AG04449 (cell line): ENCODE measurements at regions of chr3 and their contacts with region 1.

Region 1: DNA sequence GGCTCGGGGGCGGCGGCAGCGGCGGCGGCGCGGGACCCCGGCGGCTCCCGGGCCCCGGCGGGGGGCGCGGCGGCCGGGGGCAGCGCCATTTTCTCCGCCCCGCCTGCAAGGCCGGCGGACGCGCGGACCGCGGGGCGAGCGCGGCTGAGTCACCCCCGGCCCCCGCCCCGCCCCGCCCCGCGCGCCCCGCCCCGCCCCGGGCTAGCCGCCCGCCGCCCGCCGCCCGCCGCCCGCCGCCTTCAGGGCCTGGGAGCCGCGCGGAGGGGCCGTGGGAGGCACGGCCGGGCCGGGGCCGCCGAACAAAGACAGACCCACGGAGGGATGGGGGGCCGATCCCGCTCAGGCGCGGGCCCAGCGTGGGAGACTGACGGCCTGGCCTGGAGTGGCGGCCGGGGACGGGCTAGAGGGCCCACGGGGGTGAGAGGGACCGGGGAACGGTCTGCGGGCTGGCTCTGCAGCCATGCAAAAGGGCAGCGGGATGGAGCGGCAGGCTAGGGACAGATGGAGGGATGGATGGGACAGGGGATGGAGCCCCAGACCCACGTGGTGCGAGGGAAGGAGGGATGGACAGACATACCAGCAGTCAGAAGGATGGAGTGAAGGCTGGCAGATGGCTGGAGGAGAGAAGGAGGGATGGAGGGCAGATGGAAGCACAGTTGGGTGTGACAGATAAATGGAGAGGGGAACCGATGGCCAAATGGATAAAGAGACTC is at the start of gene EIF4E3:
- DNase-seq: no peak
- H3K4me3 ChIP-seq: peak within 1 kb of the TSS; percentile 69
- CTCF ChIP-seq: no peak

Region 2: DNA sequence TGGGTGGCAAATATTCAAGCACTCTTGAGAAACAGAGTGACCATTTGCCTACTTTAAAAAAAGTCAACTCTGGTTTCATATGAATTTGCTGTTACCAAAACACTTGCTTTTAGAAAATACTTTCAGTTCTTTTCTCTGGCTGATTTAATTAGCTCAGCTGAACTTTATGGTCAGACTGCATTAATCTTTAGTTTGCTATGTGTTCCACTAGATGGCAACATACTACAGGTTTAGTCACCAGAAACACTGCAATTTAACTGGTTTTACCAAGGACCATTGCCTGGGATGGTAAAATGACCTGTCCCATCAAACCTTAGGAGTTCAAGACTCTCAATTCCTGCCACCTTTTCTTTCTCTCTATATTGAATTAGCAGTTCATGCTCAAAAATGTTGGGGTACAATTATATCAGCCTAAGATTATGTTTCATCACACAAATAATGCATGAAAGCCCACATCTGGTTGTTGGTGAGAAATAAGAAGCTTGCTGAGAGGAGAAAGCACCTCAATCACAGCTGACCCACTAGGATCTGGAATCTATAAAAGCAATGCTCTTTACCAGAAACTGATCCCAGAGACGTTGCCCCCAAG is 14.4 kb before region 1 on chr3:
- CTCF ChIA-PET with region 1: interaction called, 18 read pairs
- POLR2A ChIA-PET with region 1: no interaction called
- DNase-seq: no peak
- H3K4me3 ChIP-seq: no peak overlapping the region
- CTCF ChIP-seq: peak; percentile 54

Region 3: GRCh38 chr3:71744738-71745137 is 19.3 kb after region 1 on chr3:
- CTCF ChIA-PET with region 1: interaction called, 22 read pairs
- POLR2A ChIA-PET with region 1: no interaction called
- DNase-seq: no peak
- H3K4me3 ChIP-seq: no peak overlapping the region
- CTCF ChIP-seq: no peak

Region 4: GRCh38 chr3:71751602-71752001 is 26.2 kb after region 1 on chr3:
- CTCF ChIA-PET with region 1: interaction called, 22 read pairs
- POLR2A ChIA-PET with region 1: no interaction called
- DNase-seq: no peak
- H3K4me3 ChIP-seq: no peak overlapping the region
- CTCF ChIP-seq: no peak

Region 5: DNA sequence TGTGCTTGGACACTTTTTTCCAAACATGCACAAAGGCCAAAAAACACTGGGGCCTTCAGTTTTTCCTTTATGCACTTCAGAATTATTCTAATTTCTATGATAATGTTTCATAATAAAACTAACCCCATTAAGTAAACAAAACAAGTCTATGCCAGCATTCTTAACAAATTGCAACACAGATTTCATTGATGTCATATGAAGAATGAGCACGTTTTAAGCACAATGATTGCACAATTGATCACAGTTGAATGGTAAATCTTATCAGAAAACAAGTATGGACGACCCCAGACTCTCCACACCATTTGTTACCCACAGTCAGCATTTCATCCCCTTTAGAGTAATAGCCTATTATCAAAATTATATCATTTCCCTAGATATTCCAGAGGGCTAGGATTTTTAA is 106.2 kb after region 1 on chr3:
- CTCF ChIA-PET with region 1: no interaction called
- POLR2A ChIA-PET with region 1: no interaction called
- DNase-seq: no peak
- H3K4me3 ChIP-seq: no peak overlapping the region
- CTCF ChIP-seq: no peak

Region 6: DNA sequence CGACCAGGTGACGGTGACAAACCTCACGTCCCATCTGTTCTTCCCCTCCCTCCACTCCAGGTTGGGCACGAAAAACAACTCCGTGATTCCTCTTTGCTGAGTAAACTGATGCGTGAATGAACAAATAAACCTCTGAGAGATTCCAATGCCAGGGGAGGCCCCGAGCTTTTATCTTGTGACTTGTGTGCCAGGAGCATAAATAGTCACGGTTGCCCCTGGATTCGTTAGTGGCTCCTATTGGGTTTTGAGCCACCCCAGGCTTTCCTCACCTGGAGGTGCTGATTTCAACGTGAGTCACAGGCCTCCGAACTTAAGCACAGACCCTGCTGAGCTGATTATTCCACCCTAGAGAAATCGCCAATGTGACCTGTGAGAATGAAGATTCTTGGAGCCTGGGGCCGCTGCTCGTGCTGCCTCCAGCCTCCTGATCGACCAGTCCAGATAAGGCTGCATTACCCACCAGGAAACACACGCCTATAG is 1003.6 kb after region 1 on chr3:
- CTCF ChIA-PET with region 1: no interaction called
- POLR2A ChIA-PET with region 1: no interaction called
- DNase-seq: no peak
- H3K4me3 ChIP-seq: no peak overlapping the region
- CTCF ChIP-seq: no peak